MCF 10A (cell line): ENCODE measurements at regions of chr5 and their contacts with region 1.

Region 1: DNA sequence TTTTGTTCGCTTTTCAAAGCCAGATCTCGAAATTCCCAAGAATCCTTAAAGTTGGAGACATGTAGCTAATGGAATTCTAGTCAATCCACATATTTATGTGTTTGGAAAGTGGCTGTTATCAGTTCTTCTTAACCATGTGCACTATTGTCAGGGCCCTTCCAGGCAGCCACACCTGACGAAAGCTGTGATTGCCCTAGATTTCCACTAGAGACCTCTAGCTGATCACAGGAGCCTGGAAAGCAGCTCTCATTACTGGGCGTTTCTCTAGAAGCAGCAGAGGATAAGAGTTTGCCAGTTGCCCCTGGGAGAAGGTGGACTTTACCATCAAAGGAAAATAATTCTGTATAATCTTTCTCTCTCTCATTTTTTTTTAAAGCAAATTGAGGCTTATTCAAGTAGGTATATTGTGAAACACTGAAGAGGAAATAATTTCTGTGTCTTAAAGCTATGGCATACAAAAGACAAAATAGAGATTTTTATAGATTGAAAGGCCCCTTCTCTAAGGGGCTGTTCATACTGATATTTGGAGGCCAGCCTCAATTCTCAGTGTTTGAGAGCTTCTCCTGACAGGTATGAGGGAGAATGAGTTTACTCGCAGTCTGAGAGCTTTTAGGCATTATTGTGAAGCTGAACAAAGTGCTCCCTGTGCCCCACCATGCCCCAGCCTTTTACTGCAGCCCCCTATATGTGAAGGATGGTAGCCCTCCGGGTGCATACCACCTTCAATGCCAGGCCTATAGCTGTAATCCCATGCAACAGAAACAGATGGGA is 405.4 kb upstream of the ACTBL2 start:
- DNase-seq: peak; percentile 76
- H3K4me3 Mint-ChIP-seq: no peak overlapping the region
- H3K27ac Mint-ChIP-seq: no peak overlapping the region
- H3K4me1 Mint-ChIP-seq: peaks cover 19% of the 10 kb centered on the region
- H3K27me3 Mint-ChIP-seq: no peaks in the 10 kb centered on the region
- CTCF ChIP-seq: peak; percentile 71

Region 2: DNA sequence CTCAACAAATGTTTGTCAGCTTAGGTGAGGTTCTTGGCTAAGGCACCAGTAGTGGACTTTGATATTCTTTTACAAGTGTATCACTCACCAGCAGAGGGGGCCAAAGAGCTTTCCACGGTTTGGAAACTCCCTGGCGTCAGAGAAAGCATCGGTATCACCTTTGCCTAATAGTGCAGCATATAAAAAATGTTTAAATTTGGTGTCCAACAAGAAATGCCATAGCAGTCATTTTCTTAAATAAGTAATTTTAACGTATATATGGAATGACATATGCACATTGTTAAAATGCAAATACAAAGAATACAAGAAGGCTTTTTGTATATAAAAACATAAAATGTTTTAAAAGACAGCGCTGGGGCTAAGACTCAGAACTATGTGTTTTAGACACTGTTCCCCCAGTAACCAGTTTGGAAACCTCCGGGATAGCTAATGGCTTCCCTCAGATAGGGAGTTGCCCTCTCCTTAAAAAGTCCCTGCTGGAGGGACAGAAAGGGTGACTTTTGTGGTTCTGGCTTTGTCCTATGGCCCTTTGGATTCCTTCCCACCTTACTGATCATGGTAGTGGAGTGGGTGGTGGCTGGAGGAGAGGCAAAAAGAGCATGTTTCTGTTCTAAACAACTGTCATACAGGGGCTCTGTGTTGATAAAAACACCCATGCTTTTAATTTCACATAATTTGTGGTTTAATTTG is 589.6 kb before region 1 on chr5:
- CTCF ChIA-PET with region 1: interaction called, 11 read pairs
- POLR2A ChIA-PET with region 1: interaction called, 8 read pairs
- intact Hi-C with region 1: loop called (anchors 1 kb)
- DNase-seq: peak; percentile 89
- H3K4me3 Mint-ChIP-seq: no peak overlapping the region
- H3K27ac Mint-ChIP-seq: no peak overlapping the region
- H3K4me1 Mint-ChIP-seq: peaks cover 21% of the 10 kb centered on the region
- H3K27me3 Mint-ChIP-seq: no peaks in the 10 kb centered on the region
- CTCF ChIP-seq: peak; percentile 65

Region 3: GRCh38 chr5:57779383-57780223 is 108.4 kb before region 1 on chr5:
- CTCF ChIA-PET with region 1: interaction called, 149 read pairs
- POLR2A ChIA-PET with region 1: interaction called, 12 read pairs
- intact Hi-C with region 1: loop called (anchors 1 kb)
- DNase-seq: peak; percentile 78
- H3K4me3 Mint-ChIP-seq: no peak overlapping the region
- H3K27ac Mint-ChIP-seq: no peak overlapping the region
- H3K4me1 Mint-ChIP-seq: peaks cover 6% of the 10 kb centered on the region
- H3K27me3 Mint-ChIP-seq: no peaks in the 10 kb centered on the region
- CTCF ChIP-seq: peak; percentile 64

Region 4: DNA sequence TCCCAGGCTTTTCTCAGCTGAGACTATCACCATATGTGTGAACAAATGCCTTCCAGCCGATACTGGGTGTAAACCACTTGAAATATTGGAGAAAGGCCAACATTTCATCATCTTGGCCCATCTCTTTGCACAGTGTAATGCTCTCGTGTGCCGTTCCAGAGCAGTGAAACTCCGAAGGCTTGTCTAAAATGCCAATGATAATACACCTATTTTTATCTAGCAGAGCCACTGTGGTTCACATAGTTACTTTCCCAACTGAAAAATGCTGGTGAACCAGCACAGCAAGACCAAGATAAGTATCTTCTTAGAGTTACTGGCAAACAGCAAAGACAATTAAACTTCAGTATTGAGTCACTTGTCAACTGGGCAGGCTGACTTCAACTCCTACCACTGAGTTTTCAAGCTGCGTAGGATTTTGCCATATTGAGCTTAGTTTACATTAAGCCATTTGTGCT is 25.6 kb before region 1 on chr5:
- CTCF ChIA-PET with region 1: interaction called, 17 read pairs
- POLR2A ChIA-PET with region 1: interaction called, 9 read pairs
- intact Hi-C with region 1: no loop called
- DNase-seq: peak; percentile 85
- H3K4me3 Mint-ChIP-seq: no peak overlapping the region
- H3K27ac Mint-ChIP-seq: peak overlapping the region; percentile 49
- H3K4me1 Mint-ChIP-seq: peaks cover 22% of the 10 kb centered on the region
- H3K27me3 Mint-ChIP-seq: no peaks in the 10 kb centered on the region
- CTCF ChIP-seq: no peak

Region 5: GRCh38 chr5:58188262-58188651 is 300.2 kb after region 1 on chr5:
- CTCF ChIA-PET with region 1: interaction called, 7 read pairs
- POLR2A ChIA-PET with region 1: interaction called, 3 read pairs
- intact Hi-C with region 1: loop called (anchors 2 kb)
- DNase-seq: peak; percentile 54
- H3K4me3 Mint-ChIP-seq: no peak overlapping the region
- H3K27ac Mint-ChIP-seq: no peak overlapping the region
- H3K4me1 Mint-ChIP-seq: peaks cover 28% of the 10 kb centered on the region
- H3K27me3 Mint-ChIP-seq: no peaks in the 10 kb centered on the region
- CTCF ChIP-seq: no peak

Region 6: GRCh38 chr5:58452566-58453258 is 564.7 kb after region 1 on chr5:
- CTCF ChIA-PET with region 1: interaction called, 215 read pairs
- POLR2A ChIA-PET with region 1: interaction called, 129 read pairs
- intact Hi-C with region 1: no loop called
- DNase-seq: no peak
- H3K4me3 Mint-ChIP-seq: peak overlapping the region; percentile 1
- H3K27ac Mint-ChIP-seq: peak overlapping the region; percentile 55
- H3K4me1 Mint-ChIP-seq: peaks cover 43% of the 10 kb centered on the region
- H3K27me3 Mint-ChIP-seq: no peaks in the 10 kb centered on the region
- CTCF ChIP-seq: no peak